GM13976 (cell line): ENCODE measurements at regions of chr9 and their contacts with region 1.

Region 1: DNA sequence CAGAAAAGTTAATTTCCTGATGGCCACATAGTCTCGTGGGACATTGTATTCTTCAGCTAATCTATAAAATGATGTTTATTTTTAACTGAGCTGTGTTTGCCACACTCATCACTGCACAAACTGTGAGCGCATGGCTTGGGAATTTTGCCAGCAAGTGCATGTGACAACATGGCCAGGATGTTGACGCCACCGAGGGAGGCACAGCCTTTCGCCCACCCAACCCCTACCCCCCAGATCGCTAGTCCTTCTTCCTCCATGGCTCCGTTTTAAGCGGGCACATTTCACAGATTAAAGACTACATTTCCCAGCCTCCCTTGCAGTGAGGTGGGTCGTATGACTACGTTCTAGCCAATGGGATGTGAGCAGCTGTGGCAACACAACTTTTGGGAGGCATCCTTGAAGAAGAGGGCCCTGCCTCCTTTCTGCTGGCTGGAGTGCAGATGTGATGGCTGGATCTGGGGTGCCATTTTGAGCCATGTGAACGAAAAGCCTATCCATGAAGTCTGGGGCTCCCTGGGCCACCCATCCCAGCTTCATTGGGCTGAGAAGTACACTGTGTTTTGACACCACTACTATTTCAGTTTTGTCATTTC is 7.9 kb downstream of the NRARP start:
- DNase-seq: no peak
- CTCF ChIP-seq: no peak

Region 2: GRCh38 chr9:137150617-137151457 is 143.3 kb before region 1 on chr9:
- in situ Hi-C with region 1: no loop called
- DNase-seq: peak; percentile 91
- CTCF ChIP-seq: no peak

Region 3: DNA sequence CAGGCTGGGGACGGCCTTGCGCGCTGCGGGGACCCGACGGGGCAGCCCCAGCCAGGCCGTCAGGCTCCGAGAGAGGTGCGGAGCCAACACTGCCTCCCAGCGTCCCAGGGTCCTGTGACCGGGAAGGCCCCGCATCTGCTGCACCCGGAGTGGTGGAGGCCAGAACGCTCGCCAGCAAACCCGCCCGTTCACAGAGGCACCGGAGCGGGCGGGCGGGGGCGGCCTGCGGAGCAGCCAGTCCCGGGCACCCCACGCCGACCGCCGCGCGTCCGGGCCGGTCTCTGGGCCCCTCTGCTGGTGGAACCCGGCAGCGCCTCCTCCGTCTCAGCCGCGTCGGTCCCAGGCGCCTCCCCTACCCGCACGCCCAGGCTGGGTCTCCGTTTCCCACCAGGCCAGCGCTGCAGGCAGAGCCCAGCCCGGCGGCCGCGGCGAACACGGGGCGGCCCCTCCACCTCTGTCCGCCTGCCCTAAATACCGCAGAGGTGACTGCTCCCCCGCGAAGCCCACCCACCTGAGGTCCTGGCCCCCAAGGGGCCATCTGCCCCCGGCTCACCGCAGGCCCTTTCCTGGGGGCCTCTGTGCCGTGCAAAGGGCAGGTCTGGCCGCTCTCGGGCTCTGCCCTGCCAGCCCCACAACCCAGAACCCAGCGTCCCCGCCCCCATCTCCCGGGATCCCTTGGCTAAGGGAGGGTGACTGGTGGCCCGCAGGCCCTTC is 112.8 kb after region 1 on chr9:
- in situ Hi-C with region 1: loop called (anchors 5 kb)
- DNase-seq: peak; percentile 92
- CTCF ChIP-seq: peak; percentile 87